ENCODE measurements at regions of chr9 and their contacts with region 1.

Region 1: DNA sequence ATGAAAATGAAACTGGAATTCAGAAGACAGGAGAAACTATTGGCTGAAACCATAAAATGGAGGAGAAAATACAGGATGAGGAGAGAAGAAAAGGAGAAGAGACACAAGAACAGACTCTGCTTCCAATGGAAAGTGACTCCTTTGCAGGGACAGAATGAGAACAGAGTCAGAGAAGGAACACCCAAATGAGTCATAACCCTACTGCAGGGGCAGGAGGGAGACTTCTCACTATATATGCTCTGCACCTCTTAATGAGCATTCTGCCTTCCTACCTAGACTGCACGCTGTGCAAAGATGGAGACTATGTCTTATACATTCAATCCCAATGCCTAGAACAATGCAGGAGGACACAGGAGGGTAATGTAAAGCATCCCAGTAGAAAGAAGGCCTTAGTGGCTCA is 2.1 kb downstream of the SAXO1 start:
- DNase-seq: no peak
- ATAC-seq: no peak

Region 2: GRCh38 chr9:17793713-17794622 is 1236.9 kb before region 1 on chr9:
- intact Hi-C with region 1: loop called (anchors 10 kb)
- DNase-seq: no peak
- ATAC-seq: no peak

Region 3: GRCh38 chr9:18255158-18255629 is 775.7 kb before region 1 on chr9:
- intact Hi-C with region 1: loop called (anchors 1 kb)
- DNase-seq: peak; percentile 92
- ATAC-seq: peak; percentile 92

Region 4: GRCh38 chr9:19087106-19088000 is 56.5 kb after region 1 on chr9:
- intact Hi-C with region 1: no loop called
- DNase-seq: no peak
- ATAC-seq: no peak